Gastrocnemius medialis (tissue), 4 donors: ENCODE measurements at regions of chr19 and their contacts with region 1.

Region 1: GRCh38 chr19:9818734-9819589 is at the start of gene FBXL12:
- DNase-seq: peak; percentile 100
- ATAC-seq: peak; percentile 88 to 91
- H3K4me3 ChIP-seq: peak within 1 kb of the TSS; percentile 93 to 100 (median 95)
- H3K27ac ChIP-seq: peak within 1 kb of the TSS; percentile 91 to 100 (median 98)
- H3K4me1 ChIP-seq: peaks cover 10 to 23% of the 10 kb centered on the region in 2 donors
- H3K27me3 ChIP-seq: no peaks in the 10 kb centered on the region
- CTCF ChIP-seq: no peak
- POLR2A ChIP-seq: peak; percentile 71 to 79
- total RNA-seq, gene FBXL12: 7.6 to 28.4 (median 15.1) TPM

Region 2: GRCh38 chr19:9834726-9835506 is 16.0 kb after region 1 on chr19 and contains the start of gene PIN1:
- in situ Hi-C with region 1: no loop called
- intact Hi-C with region 1: loop called (anchors 1 kb)
- DNase-seq: peak; percentile 98 to 99
- ATAC-seq: peak; percentile 98 to 99
- H3K4me3 ChIP-seq: peak within 1 kb of the TSS; percentile 74 to 99 (median 94)
- H3K27ac ChIP-seq: peak within 1 kb of the TSS; percentile 78 to 90 (median 87)
- H3K4me1 ChIP-seq: peaks cover 12 to 18% of the 10 kb centered on the region in 2 donors
- H3K27me3 ChIP-seq: no peaks in the 10 kb centered on the region
- CTCF ChIP-seq: peak; percentile 36 to 74 (median 43)
- POLR2A ChIP-seq: peak; percentile 24 to 52
- total RNA-seq, gene PIN1: 83.9 to 111 (median 93.4) TPM

Region 3: DNA sequence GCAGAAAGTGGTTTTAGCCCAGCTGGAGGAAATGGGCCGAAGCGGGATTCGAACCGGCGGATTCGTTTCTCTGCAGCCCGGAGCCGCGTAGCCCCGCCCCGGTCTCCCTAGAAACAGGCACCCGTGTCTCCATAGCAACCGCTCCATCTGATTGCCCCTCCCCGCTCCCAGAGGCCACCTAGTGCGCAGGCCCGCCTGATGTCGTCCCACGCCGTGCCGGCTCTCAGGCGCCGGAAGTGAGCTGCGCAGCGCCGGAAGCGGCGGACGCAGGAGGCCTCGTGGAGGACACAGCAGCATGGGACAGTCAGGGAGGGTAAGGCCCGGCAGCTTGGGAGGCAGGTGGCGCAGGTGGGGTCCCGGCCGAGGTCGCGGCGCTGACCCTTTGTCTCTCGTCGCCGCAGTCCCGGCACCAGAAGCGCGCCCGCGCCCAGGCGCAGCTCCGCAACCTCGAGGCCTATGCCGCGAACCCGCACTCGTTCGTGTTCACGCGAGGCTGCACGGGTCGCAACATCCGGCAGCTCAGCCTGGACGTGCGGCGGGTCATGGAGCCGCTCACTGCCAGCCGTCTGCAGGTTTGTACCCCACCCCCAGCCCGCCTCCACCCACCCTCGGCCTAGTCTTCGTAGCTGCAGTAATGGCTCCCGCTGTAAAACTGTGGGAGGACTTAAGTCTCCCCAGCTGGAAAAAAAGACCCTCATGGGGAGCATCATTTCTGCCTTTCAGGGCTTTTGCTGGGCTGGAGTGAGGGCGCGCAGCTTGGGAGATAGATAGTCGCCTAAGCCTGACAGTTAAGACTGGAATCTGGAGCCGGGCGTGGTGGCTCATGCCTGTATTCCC is 287.4 kb after region 1 on chr19 and contains the start of gene PPAN:
- in situ Hi-C with region 1: no loop called
- intact Hi-C with region 1: loop called (anchors 5 kb)
- DNase-seq: peak; percentile 97 to 98
- ATAC-seq: peak; percentile 94 to 98
- H3K4me3 ChIP-seq: peak within 1 kb of the TSS; percentile 79 to 97 (median 85)
- H3K27ac ChIP-seq: peak within 1 kb of the TSS; percentile 74 to 88 (median 88)
- H3K4me1 ChIP-seq: peaks cover 7 to 15% of the 10 kb centered on the region in 2 donors
- H3K27me3 ChIP-seq: no peaks in the 10 kb centered on the region
- CTCF ChIP-seq: no peak
- POLR2A ChIP-seq: peak; percentile 72 to 83
- total RNA-seq, gene PPAN: 30.5 to 42.3 (median 36.7) TPM